WTC11 (cell line): ENCODE measurements at regions of chr1 and their contacts with region 1.

Region 1: DNA sequence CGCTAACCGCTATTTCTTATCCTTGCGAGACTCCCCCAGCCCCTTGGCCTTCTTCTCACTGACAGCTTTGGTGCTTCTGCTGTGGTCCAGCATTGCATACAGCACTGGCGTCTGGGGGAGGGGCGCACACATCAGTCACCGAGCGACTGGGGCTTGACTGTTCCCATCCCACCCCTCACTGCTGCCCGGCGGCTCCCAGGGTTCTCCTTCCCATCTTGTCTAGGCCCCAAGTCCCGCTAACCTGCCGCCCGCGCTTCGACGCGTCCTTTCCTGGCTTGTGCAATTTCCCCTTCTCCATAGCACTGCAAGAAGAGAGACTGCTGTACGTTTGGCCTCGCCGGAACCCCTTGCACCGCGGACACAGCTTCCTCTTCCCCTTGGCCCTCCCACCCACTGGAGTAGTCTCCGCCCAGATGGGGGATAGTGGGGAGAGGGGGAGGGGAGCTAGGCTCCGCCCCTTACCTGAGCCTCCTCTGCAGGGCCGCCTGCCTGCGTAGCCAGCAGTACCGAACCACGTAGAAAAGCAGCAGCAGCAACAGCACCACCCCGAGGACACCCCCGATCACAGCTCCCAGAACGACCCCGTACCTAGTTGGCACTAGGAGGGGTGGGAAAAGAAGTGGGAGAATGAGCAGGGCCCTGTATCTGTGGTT is 3.8 kb downstream of the MPZ start:
- DNase-seq: peak; percentile 98
- ATAC-seq: peak; percentile 97
- H3K4me3 Mint-ChIP-seq: peak overlapping the region; percentile 99
- H3K27ac Mint-ChIP-seq: peak overlapping the region; percentile 89
- H3K4me1 Mint-ChIP-seq: peaks cover 45% of the 10 kb centered on the region
- H3K27me3 Mint-ChIP-seq: no peaks in the 10 kb centered on the region
- CTCF ChIP-seq: no peak

Region 2: DNA sequence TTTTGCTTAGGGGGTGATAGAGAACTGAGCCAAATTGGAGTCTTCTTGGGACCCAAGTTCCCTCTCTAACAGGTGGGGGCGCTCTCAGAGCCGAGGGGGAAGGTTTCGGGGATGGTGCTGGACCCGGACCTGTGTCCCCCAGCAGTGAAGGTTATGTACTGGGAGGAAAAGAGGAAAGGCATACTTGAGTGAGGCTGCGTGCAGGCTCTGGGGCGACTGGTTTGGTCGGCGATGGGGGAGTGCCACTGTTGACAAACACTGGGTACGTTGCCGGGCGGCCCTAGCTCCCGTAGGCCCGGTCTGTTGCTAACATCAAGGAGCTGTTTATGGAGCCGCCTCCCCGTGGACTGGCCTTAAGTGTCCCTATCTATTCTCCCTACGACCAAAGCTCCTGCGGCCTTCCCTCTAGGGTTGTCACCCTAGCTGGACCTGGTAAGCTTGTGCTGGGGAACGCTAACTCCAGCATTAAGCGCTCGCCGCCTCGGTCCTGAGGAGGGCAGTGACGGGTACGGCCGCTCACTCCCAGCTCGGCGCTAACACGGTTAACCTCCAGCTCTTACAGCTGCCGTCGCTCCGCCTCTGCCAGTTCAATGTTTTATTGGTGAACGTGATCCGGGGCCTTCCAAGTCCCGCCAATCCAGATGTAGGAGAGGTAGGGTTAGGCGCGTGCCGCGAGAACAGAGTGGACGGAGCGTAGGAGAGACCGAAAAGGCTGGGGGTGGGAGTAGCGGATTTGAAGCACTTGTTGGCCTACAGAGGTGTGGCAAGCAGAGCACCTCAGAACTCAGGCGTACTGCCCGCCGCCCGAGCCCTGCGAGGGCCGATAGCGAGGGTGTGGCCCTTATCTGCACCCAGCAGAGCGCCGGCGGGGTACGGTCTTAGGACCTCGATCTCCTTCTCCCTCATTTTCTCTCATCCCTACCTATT is 140.0 kb before region 1 on chr1 and contains the start of gene PPOX:
- CTCF ChIA-PET with region 1: interaction called, 12 read pairs
- POLR2A ChIA-PET with region 1: no interaction called
- DNase-seq: peak; percentile 94
- ATAC-seq: peak; percentile 95
- H3K4me3 Mint-ChIP-seq: peak within 1 kb of the TSS; percentile 79
- H3K27ac Mint-ChIP-seq: peak within 1 kb of the TSS; percentile 13
- H3K4me1 Mint-ChIP-seq: peaks cover 8% of the 10 kb centered on the region
- H3K27me3 Mint-ChIP-seq: no peaks in the 10 kb centered on the region
- CTCF ChIP-seq: peak; percentile 28; the same call in 1 of the 2 replicates
- total RNA-seq, gene PPOX: 39.8 to 44.8 TPM (median 43.4 TPM) in 3 replicates

Region 3: GRCh38 chr1:161238039-161238473 is 67.9 kb before region 1 on chr1 and contains the start of gene NR1I3:
- CTCF ChIA-PET with region 1: interaction called, 15 read pairs
- POLR2A ChIA-PET with region 1: no interaction called
- DNase-seq: no peak
- ATAC-seq: no peak
- H3K4me3 Mint-ChIP-seq: no peak within 1 kb of the TSS
- H3K27ac Mint-ChIP-seq: no peak within 1 kb of the TSS
- H3K4me1 Mint-ChIP-seq: no peaks in the 10 kb centered on the region
- H3K27me3 Mint-ChIP-seq: peaks cover 4% of the 10 kb centered on the region
- CTCF ChIP-seq: no peak
- total RNA-seq, gene NR1I3: 0.16 TPM in 1 of 3 replicates, not detected in the others

Region 4: DNA sequence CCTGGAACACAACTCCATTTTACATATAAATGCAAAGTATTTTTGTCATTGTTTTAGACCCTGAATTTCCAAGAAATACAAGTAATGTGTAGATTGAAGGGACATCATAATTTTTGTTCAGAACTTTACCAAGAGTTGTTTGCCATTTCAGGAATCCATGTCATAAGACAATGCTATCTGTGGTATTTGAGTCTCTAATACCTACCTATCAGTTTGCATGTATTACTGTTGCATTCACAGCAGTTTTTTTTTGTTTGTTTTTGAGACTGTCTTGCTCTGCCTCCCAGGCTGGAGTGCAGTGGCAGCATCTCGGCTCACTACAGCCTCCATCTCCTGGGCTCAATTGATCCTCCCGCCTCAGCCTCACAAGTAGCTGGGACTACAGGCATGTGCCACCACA is 13.4 kb before region 1 on chr1:
- CTCF ChIA-PET with region 1: interaction called, 65 read pairs
- POLR2A ChIA-PET with region 1: interaction called, 5 read pairs
- DNase-seq: no peak
- ATAC-seq: no peak
- H3K4me3 Mint-ChIP-seq: no peak overlapping the region
- H3K27ac Mint-ChIP-seq: no peak overlapping the region
- H3K4me1 Mint-ChIP-seq: peaks cover 4% of the 10 kb centered on the region; the same call in 1 of the 2 replicates
- H3K27me3 Mint-ChIP-seq: no peaks in the 10 kb centered on the region
- CTCF ChIP-seq: no peak

Region 5: GRCh38 chr1:161330346-161330745 is 24.4 kb after region 1 on chr1:
- CTCF ChIA-PET with region 1: no interaction called
- POLR2A ChIA-PET with region 1: no interaction called
- DNase-seq: no peak
- ATAC-seq: no peak
- H3K4me3 Mint-ChIP-seq: no peak overlapping the region
- H3K27ac Mint-ChIP-seq: no peak overlapping the region
- H3K4me1 Mint-ChIP-seq: no peaks in the 10 kb centered on the region
- H3K27me3 Mint-ChIP-seq: no peaks in the 10 kb centered on the region
- CTCF ChIP-seq: no peak

Region 6: DNA sequence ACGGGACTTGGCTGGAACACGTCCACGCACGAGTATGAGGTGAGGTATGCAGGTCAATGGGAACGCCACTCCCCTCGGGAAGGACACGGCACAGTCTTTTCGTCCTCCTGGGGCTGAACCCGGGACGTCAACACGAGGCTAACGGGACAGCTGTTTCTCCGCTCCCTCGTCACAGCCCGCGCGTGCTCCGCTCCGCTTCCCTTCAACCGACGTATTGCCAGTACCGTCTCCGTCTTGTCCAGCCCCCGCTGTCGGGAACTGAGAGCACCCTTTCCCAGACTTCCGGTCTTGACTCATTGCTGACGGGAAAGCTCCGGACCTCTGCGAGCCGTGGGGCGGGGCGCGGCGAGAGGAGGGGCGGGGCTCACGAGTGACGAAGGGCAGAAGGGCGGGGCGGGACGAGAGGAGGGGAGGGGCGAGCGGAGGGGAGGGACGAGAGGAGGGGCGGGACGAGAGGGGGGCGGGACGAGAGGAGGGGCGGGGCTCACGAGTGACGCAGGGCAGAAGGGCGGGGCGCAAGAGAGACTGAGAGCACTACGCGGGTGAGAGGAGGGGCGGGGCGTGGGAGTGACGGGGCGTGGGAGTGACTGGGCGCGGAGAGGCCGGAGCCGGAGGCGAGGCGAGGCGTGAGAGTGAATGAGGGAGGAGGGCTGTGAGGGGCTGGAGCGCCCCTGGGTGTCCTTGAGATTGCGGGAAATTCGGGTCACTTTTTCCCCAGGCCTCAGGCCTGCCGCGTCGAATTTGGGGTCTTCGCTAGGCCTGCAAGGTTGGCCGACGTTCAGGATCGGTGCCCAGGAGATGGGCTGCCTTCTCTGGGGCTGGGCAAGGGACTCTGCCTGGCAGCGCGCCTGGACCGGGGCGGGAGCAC is 83.9 kb after region 1 on chr1:
- CTCF ChIA-PET with region 1: interaction called, 10 read pairs
- POLR2A ChIA-PET with region 1: interaction called, 3 read pairs
- DNase-seq: peak; percentile 91
- ATAC-seq: peak; percentile 85
- H3K4me3 Mint-ChIP-seq: peak overlapping the region; percentile 92
- H3K27ac Mint-ChIP-seq: peak overlapping the region; percentile 95
- H3K4me1 Mint-ChIP-seq: peaks cover 17% of the 10 kb centered on the region
- H3K27me3 Mint-ChIP-seq: peaks cover 15% of the 10 kb centered on the region; the same call in 1 of the 2 replicates
- CTCF ChIP-seq: no peak